B cell (primary cell): ENCODE measurements at regions of chr16 and their contacts with region 1.

Region 1: GRCh38 chr16:89815639-89816348 is 653 bp downstream of the FANCA start:
- DNase-seq: peak; percentile 44
- ATAC-seq: no peak
- H3K4me3 ChIP-seq: peak overlapping the region; percentile 33 to 76 (median 45)
- H3K4me3 Mint-ChIP-seq: peak overlapping the region; percentile 85
- H3K27ac ChIP-seq: no peak overlapping the region
- H3K27ac Mint-ChIP-seq: peak overlapping the region; percentile 62
- H3K4me1 ChIP-seq: peaks cover 5 to 12% of the 10 kb centered on the region in 2 donors
- H3K4me1 Mint-ChIP-seq: peaks cover 6% of the 10 kb centered on the region
- H3K27me3 ChIP-seq: peaks cover 0 to 5% (median 0%) of the 10 kb centered on the region in 4 experiments
- H3K27me3 Mint-ChIP-seq: no peaks in the 10 kb centered on the region
- CTCF ChIP-seq: no peak

Region 2: DNA sequence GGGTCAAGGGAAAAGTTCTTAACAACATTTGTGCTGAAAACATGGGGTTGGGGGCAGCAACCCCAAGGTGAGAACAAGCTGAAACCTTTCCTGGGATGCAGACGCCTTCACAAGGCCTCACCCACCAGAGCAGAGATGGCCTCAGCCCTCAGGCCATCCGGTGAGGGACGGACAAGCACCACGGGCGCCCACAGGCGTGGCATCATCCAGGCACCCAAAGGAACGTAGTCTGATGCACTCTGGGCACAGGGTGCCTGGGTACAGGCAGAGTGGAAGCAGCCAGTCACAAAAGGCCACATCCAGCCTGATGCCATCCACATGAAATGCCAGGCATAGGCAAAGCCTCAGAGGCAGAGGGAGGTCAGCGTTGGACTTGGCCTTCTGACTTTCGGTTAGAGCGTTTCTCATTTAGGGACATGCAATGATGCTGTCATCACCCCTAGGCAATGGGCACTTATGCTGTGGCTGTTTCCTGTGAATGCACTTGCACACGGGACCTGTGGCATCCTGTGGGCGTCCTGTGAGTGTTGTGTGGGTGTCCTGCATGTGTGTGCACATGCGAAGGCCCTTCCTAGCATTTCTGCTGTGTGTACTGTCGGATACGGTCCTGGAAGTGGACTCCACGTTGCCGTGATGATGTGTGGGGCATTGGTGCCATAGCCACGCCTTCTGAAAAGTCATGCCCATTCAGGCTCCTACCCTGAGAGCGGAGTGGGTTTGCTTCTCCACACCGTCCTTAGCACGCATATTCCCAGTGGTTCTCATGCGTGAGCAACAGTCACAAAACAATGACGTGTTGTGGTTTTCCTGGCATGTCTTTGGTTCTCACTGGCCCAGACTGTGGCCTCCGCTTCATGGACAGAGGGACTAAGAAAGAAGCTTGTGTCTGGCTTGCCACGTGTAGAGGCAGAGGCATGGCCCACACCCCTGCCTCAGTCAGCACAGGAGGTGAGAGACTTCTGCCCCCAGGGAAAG is 1485.8 kb before region 1 on chr16:
- CTCF ChIA-PET with region 1: no interaction called
- POLR2A ChIA-PET with region 1: no interaction called
- intact Hi-C with region 1: no loop called
- DNase-seq: no peak
- ATAC-seq: no peak
- H3K4me3 ChIP-seq: no peak overlapping the region
- H3K4me3 Mint-ChIP-seq: no peak overlapping the region
- H3K27ac ChIP-seq: no peak overlapping the region
- H3K27ac Mint-ChIP-seq: no peak overlapping the region
- H3K4me1 ChIP-seq: peaks cover 8 to 10% of the 10 kb centered on the region in 2 donors
- H3K4me1 Mint-ChIP-seq: peaks cover 6% of the 10 kb centered on the region
- H3K27me3 ChIP-seq: peaks cover 0 to 12% (median 2%) of the 10 kb centered on the region in 4 experiments
- H3K27me3 Mint-ChIP-seq: peaks cover 15% of the 10 kb centered on the region
- CTCF ChIP-seq: no peak

Region 3: DNA sequence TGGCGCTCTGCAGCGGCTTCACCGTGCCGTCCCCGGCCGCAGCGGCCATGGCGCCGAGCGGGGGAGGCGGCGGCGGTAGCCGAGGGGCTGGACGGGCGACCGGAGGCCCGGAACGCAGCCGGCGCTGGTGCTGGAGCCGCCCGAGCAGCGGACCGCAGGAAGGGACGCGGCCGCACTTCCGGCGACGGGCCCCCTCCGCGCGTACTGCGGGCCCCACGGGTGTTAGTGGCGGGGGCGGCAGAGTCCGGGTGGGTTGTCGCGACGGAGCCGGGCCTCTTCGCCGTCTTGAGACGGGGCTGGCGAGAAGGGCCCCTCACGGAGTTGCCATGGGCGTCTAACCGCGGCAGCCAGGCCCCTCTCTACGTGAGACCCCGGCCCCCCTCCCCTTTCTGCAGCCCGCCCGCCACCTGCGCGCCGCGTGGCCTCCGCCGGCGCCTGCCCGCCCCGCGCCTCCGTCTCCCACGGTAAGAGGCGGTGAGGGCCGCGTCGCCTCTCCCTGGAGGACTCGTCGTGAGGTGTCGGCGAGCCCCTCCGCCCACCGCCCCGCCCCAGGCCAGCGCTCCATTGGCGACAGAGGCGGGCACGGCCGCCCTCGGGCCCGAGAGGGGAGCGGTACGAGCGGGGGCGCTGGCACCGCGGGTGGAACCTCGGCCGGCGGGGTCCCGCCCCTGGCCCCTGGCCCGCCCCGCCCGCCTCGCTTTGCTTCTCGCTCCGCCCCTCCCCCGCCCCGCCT is 94.8 kb before region 1 on chr16 and contains the starts of genes VPS9D1 and ZNF276:
- CTCF ChIA-PET with region 1: interaction called, 3 read pairs
- POLR2A ChIA-PET with region 1: no interaction called
- intact Hi-C with region 1: loop called (anchors 1 kb)
- DNase-seq: peak; percentile 90
- ATAC-seq: peak; percentile 71
- H3K4me3 ChIP-seq: peak within 1 kb of the TSS; percentile 61 to 97 (median 72)
- H3K4me3 Mint-ChIP-seq: peak within 1 kb of the TSS; percentile 88
- H3K27ac ChIP-seq: peak within 1 kb of the TSS; percentile 59 to 92
- H3K27ac Mint-ChIP-seq: peak within 1 kb of the TSS; percentile 92
- H3K4me1 ChIP-seq: peaks cover 27 to 34% of the 10 kb centered on the region in 2 donors
- H3K4me1 Mint-ChIP-seq: peaks cover 26% of the 10 kb centered on the region
- H3K27me3 ChIP-seq: no peaks in the 10 kb centered on the region
- H3K27me3 Mint-ChIP-seq: no peaks in the 10 kb centered on the region
- CTCF ChIP-seq: no peak
- total RNA-seq, gene VPS9D1: 14.6 and 15.1 TPM in 2 replicates
- total RNA-seq, gene ZNF276: 82.7 and 87.3 TPM in 2 replicates

Region 4: GRCh38 chr16:89828199-89828778 is 12.5 kb after region 1 on chr16 and contains the start of gene SPIRE2:
- CTCF ChIA-PET with region 1: interaction called, 3 read pairs
- POLR2A ChIA-PET with region 1: no interaction called
- intact Hi-C with region 1: loop called (anchors 1 kb)
- DNase-seq: peak; percentile 84
- ATAC-seq: peak; percentile 98
- H3K4me3 ChIP-seq: peak within 1 kb of the TSS in 1 of 5 experiments; percentile 25
- H3K4me3 Mint-ChIP-seq: peak within 1 kb of the TSS; percentile 70
- H3K27ac ChIP-seq: no peak within 1 kb of the TSS
- H3K27ac Mint-ChIP-seq: no peak within 1 kb of the TSS
- H3K4me1 ChIP-seq: peaks cover 8 to 9% of the 10 kb centered on the region in 2 donors
- H3K4me1 Mint-ChIP-seq: peaks cover 6% of the 10 kb centered on the region
- H3K27me3 ChIP-seq: peaks cover 0 to 46% (median 12%) of the 10 kb centered on the region in 4 experiments
- H3K27me3 Mint-ChIP-seq: peaks cover 27% of the 10 kb centered on the region
- CTCF ChIP-seq: no peak
- total RNA-seq, gene SPIRE2: 2.0 and 2.7 TPM in 2 replicates

Region 5: DNA sequence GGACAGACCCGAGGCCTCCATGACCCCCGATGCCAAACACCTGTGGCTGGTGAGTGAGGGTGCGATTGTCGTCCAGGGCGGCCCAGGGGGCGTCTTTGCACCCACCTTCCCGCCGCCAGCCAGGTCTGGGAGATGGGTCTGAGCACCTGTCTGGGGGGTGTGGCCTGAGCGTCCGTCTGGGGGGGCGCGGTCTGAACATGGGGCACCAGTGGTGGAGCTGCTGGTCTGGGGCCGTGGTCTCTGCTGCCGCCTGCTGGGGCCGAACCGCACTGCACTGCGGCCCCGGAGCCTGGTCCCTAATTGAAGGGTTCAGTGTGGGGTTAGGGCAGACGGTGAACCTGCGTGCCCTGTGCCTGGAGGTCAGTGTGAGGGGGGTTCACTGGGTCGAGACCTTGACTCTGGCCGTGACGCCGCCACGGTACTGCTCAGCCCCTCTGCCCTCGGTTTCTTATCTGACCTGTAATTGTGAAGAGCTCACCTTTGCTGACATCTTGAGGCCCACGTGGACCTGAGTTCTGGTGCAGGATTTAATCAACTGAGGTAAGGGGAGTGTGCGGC is 45.0 kb after region 1 on chr16:
- CTCF ChIA-PET with region 1: interaction called, 6 read pairs
- POLR2A ChIA-PET with region 1: interaction called, 4 read pairs
- intact Hi-C with region 1: loop called (anchors 2 kb)
- DNase-seq: peak; percentile 84
- ATAC-seq: peak; percentile 93
- H3K4me3 ChIP-seq: no peak overlapping the region
- H3K4me3 Mint-ChIP-seq: no peak overlapping the region
- H3K27ac ChIP-seq: no peak overlapping the region
- H3K27ac Mint-ChIP-seq: no peak overlapping the region
- H3K4me1 ChIP-seq: peaks cover 17 to 29% of the 10 kb centered on the region in 2 donors
- H3K4me1 Mint-ChIP-seq: peaks cover 29% of the 10 kb centered on the region
- H3K27me3 ChIP-seq: peaks cover 0 to 4% (median 0%) of the 10 kb centered on the region in 4 experiments
- H3K27me3 Mint-ChIP-seq: no peaks in the 10 kb centered on the region
- CTCF ChIP-seq: peak; percentile 92

Region 6: GRCh38 chr16:89945670-89946069 is 129.9 kb after region 1 on chr16:
- CTCF ChIA-PET with region 1: no interaction called
- POLR2A ChIA-PET with region 1: no interaction called
- intact Hi-C with region 1: no loop called
- DNase-seq: no peak
- ATAC-seq: no peak
- H3K4me3 ChIP-seq: no peak overlapping the region
- H3K4me3 Mint-ChIP-seq: no peak overlapping the region
- H3K27ac ChIP-seq: no peak overlapping the region
- H3K27ac Mint-ChIP-seq: no peak overlapping the region
- H3K4me1 ChIP-seq: peaks cover 46 to 58% of the 10 kb centered on the region in 2 donors
- H3K4me1 Mint-ChIP-seq: peaks cover 43% of the 10 kb centered on the region
- H3K27me3 ChIP-seq: peaks cover 0 to 6% (median 1%) of the 10 kb centered on the region in 4 experiments
- H3K27me3 Mint-ChIP-seq: peaks cover 24% of the 10 kb centered on the region
- CTCF ChIP-seq: no peak

Region 7: GRCh38 chr16:90008708-90009535 is 193.1 kb after region 1 on chr16:
- CTCF ChIA-PET with region 1: no interaction called
- POLR2A ChIA-PET with region 1: no interaction called
- intact Hi-C with region 1: no loop called
- DNase-seq: peak; percentile 90
- ATAC-seq: peak; percentile 90
- H3K4me3 ChIP-seq: peak overlapping the region in 4 of 5 experiments; percentile 26 to 51 (median 38)
- H3K4me3 Mint-ChIP-seq: peak overlapping the region; percentile 80
- H3K27ac ChIP-seq: peak overlapping the region; percentile 70 to 76
- H3K27ac Mint-ChIP-seq: peak overlapping the region; percentile 92
- H3K4me1 ChIP-seq: peaks cover 54 to 68% of the 10 kb centered on the region in 2 donors
- H3K4me1 Mint-ChIP-seq: peaks cover 56% of the 10 kb centered on the region
- H3K27me3 ChIP-seq: no peaks in the 10 kb centered on the region
- H3K27me3 Mint-ChIP-seq: no peaks in the 10 kb centered on the region
- CTCF ChIP-seq: no peak